GM12878 (cell line): ENCODE measurements at regions of chr22 and their contacts with region 1.

Region 1: GRCh38 chr22:36194971-36195370 is 6.6 kb downstream of the APOL4 start:
- DNase-seq: no peak
- ATAC-seq: peak; percentile 91
- H3K4me3 ChIP-seq: no peak overlapping the region
- H3K27ac ChIP-seq: no peak overlapping the region
- H3K4me1 ChIP-seq: peaks cover 12% of the 10 kb centered on the region
- H3K27me3 ChIP-seq: no peaks in the 10 kb centered on the region
- CTCF ChIP-seq: peak; percentile 68 to 79 (median 78)
- EP300 ChIP-seq: no peak
- POLR2A ChIP-seq: no peak
- RAD21 ChIP-seq: peak; percentile 72

Region 2: GRCh38 chr22:36211237-36211861 is 16.4 kb after region 1 on chr22:
- CTCF ChIA-PET with region 1: interaction called, 21 read pairs
- POLR2A ChIA-PET with region 1: interaction called, 3 read pairs
- RAD21 ChIA-PET with region 1: interaction called, 5 read pairs
- SMC1A ChIA-PET with region 1: interaction called, 5 read pairs
- in situ Hi-C with region 1: no loop called
- intact Hi-C with region 1: no loop called
- DNase-seq: no peak
- ATAC-seq: peak; percentile 72
- H3K4me3 ChIP-seq: no peak overlapping the region
- H3K27ac ChIP-seq: no peak overlapping the region
- H3K4me1 ChIP-seq: peaks cover 4% of the 10 kb centered on the region
- H3K27me3 ChIP-seq: no peaks in the 10 kb centered on the region
- CTCF ChIP-seq: no peak
- EP300 ChIP-seq: no peak
- POLR2A ChIP-seq: no peak
- RAD21 ChIP-seq: no peak

Region 3: DNA sequence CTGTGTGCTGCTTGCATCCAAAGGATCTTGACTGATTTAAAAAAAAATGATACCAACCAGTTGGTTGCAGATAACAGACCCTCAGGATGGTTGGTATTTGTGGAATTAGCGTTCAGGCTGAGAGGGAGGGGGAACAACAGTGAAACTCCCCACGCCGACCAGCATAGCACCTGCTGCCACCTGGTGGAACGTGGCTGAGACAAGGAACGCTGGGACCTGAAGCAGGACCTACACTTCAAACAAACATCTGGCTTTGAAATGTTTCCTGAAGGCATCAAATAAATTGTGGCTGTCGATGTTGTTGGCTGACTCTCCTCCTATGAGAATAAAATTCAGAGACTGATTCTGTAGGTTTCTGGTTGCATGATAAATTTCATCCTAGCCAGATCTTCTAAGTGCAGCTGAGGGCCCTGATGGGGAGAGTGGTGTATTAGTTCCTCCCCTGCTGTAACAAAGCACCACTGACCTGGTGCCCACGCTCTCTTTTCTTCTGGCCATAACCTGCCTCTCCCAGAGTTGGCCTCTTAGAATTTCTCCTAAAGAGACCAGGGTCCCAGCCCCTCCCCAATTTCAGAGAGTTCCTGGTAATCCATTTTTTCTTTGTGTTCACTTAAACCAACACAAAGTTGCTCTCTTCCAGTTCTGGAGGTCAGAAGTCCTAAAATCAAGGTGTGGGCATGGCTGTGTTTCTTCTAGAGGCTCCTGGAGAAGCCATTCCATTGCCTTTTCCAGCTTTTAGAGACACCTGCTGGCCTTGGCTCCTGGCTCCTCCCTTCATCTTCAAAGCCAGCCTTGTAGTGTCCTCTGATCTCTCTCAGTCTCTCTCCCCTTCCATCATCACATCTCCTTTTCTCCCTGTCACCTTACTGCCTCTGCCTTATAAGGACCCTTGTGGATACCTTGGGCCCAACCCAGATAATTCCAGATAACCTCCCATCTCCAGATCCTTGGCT is 27.1 kb after region 1 on chr22:
- CTCF ChIA-PET with region 1: interaction called, 32 read pairs
- POLR2A ChIA-PET with region 1: interaction called, 4 read pairs
- RAD21 ChIA-PET with region 1: interaction called, 8 read pairs
- SMC1A ChIA-PET with region 1: interaction called, 9 read pairs
- in situ Hi-C with region 1: no loop called
- intact Hi-C with region 1: loop called (anchors 1 kb)
- DNase-seq: no peak
- ATAC-seq: peak; percentile 98
- H3K4me3 ChIP-seq: no peak overlapping the region
- H3K27ac ChIP-seq: no peak overlapping the region
- H3K4me1 ChIP-seq: no peaks in the 10 kb centered on the region
- H3K27me3 ChIP-seq: no peaks in the 10 kb centered on the region
- CTCF ChIP-seq: peak; percentile 76 to 83 (median 81)
- EP300 ChIP-seq: no peak
- POLR2A ChIP-seq: no peak
- RAD21 ChIP-seq: peak; percentile 67

Region 4: GRCh38 chr22:36277482-36278291 is 82.7 kb after region 1 on chr22:
- CTCF ChIA-PET with region 1: interaction called, 94 read pairs
- POLR2A ChIA-PET with region 1: no interaction called
- RAD21 ChIA-PET with region 1: interaction called, 19 read pairs
- SMC1A ChIA-PET with region 1: interaction called, 18 read pairs
- in situ Hi-C with region 1: loop called (anchors 5 kb)
- intact Hi-C with region 1: loop called (anchors 2 kb)
- DNase-seq: no peak
- ATAC-seq: peak; percentile 93
- H3K4me3 ChIP-seq: no peak overlapping the region
- H3K27ac ChIP-seq: no peak overlapping the region
- H3K4me1 ChIP-seq: peaks cover 6% of the 10 kb centered on the region
- H3K27me3 ChIP-seq: no peaks in the 10 kb centered on the region
- CTCF ChIP-seq: peak; percentile 79 to 85 (median 83)
- EP300 ChIP-seq: no peak
- POLR2A ChIP-seq: no peak
- RAD21 ChIP-seq: peak; percentile 64

Region 5: DNA sequence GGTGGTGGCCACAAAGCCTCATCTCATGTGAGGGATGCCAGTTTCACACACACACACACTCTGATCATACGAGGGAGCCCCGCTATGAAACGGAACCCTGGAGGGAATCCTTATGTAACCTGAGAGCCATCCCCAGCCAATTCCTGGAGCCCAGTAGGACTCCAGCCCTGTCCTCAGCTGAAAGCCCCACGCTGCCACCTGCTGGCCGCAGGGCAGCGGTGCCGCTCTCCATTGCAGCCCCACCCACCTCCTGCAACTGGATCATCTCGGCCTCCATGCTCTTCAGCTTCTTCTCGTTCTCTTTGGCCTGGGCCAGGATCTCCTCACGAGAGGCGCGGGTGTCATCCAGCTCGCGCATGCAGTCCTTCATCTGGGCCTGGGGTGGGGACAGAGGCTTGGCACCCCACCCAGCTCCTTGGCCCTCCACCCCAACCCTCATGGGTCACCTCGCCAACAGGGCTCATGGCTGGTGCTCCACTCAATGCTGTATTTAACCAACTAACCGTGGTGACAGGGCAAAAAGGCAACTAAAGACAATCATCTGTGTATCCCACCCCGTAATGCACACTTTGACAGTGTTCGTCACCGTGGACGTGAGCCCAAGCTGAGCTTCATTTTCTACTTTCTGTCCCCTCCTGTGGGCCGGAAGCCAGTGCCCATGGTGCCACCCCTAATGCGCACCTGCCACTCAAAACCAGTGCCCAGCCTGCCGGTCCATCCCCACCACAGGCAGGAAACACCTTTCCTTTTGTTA is 91.7 kb after region 1 on chr22:
- CTCF ChIA-PET with region 1: interaction called, 13 read pairs
- POLR2A ChIA-PET with region 1: no interaction called
- RAD21 ChIA-PET with region 1: interaction called, 10 read pairs
- SMC1A ChIA-PET with region 1: interaction called, 6 read pairs
- in situ Hi-C with region 1: no loop called
- intact Hi-C with region 1: no loop called
- DNase-seq: no peak
- ATAC-seq: peak; percentile 93
- H3K4me3 ChIP-seq: no peak overlapping the region
- H3K27ac ChIP-seq: no peak overlapping the region
- H3K4me1 ChIP-seq: no peaks in the 10 kb centered on the region
- H3K27me3 ChIP-seq: no peaks in the 10 kb centered on the region
- CTCF ChIP-seq: peak; percentile 79 to 92 (median 86)
- EP300 ChIP-seq: no peak
- POLR2A ChIP-seq: peak; percentile 48
- RAD21 ChIP-seq: peak; percentile 55

Region 6: DNA sequence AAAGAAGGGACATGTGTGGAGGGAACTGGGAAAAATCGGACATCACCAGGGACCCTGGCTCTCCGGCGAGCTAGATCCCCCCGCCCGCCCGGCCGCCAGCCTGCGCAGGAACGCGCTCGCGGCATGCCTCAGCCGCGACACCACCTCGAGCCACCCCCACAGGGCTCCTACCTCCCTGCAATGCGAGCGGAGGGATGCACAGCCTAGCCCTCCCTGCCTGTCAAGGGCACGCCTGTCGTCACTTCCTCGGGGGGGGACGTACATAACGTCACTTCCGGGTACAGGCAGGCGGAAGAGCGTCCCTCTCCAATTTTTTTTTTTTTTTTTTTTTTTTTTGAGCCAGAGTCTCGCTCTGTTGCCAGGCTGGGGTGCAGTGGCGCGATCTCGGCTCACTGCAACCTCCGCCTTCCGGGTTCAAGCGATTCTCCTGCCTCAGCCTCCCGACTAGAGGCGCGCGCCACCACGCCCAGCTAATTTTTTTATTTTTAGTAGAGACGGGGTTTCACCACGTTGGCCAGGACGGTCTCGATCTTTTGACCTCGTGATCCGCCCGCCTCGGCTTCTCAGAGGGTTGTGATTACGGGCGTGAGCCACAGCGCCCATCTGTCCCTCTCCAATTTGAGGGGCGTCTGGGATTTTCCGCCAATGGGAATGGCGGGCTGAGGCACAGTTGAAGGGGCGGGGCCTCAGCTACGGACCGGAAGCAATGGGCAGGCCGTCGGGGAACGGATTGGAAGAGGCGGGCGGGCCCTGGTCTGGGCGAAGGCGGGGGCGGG is 286.6 kb after region 1 on chr22 and contains the start of gene TXN2:
- CTCF ChIA-PET with region 1: interaction called, 8 read pairs
- POLR2A ChIA-PET with region 1: no interaction called
- RAD21 ChIA-PET with region 1: no interaction called
- SMC1A ChIA-PET with region 1: no interaction called
- in situ Hi-C with region 1: no loop called
- intact Hi-C with region 1: loop called (anchors 10 kb)
- DNase-seq: peak; percentile 82
- ATAC-seq: peak; percentile 94
- H3K4me3 ChIP-seq: peak within 1 kb of the TSS; percentile 96
- H3K27ac ChIP-seq: peak within 1 kb of the TSS; percentile 95
- H3K4me1 ChIP-seq: peaks cover 6% of the 10 kb centered on the region
- H3K27me3 ChIP-seq: no peaks in the 10 kb centered on the region
- CTCF ChIP-seq: no peak
- EP300 ChIP-seq: no peak
- POLR2A ChIP-seq: peak; percentile 99
- RAD21 ChIP-seq: no peak
- polyA plus RNA-seq, gene TXN2: 330 to 350 TPM

Region 7: DNA sequence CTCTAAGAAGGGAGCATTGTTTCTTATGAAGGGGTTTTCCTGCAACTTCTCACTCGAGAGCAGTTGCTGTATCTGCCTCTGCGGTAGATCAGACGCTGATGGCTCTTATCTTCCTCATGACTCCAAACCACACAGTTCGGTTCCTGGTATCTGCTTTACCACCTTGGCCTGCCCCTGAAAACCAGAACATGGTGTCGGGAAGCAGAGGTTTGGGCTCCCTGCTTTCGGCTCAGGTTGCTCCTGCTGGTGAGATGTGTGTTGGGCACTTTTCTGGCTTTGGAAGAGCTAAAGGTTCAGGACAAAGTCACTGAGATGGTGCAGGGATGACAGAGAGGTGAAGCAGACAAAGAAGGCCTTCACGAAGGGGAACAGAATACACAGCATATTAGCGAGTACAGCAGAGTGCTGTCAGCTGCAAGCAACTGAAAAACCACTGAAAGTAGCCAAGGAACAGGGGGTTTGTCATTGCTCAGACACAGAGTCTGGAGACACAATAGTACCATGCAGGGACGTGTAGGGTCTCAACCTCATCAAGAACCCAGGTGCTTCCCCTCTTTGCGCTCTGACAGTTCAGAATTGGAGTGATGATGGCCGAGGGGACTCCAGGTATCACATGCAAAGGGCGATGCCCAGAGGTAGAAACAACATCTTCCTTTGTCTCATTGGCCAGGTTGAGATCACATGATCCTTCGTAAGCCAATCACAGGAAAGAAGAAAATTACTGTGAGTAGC is 706.6 kb after region 1 on chr22:
- CTCF ChIA-PET with region 1: no interaction called
- POLR2A ChIA-PET with region 1: no interaction called
- RAD21 ChIA-PET with region 1: no interaction called
- SMC1A ChIA-PET with region 1: no interaction called
- in situ Hi-C with region 1: no loop called
- intact Hi-C with region 1: no loop called
- DNase-seq: peak; percentile 90
- ATAC-seq: peak; percentile 85
- H3K4me3 ChIP-seq: peak overlapping the region; percentile 35; the same call in 1 of the 2 replicates
- H3K27ac ChIP-seq: peak overlapping the region; percentile 80
- H3K4me1 ChIP-seq: peaks cover 33% of the 10 kb centered on the region
- H3K27me3 ChIP-seq: no peaks in the 10 kb centered on the region
- CTCF ChIP-seq: 0 out of 6 replicates have a peak, but pooled peaks of 1 of the 3 experiments have one; percentile 3
- EP300 ChIP-seq: peak; percentile 60 to 84
- POLR2A ChIP-seq: 0 out of 2 replicates have a peak, but pooled peaks have one; percentile 22
- RAD21 ChIP-seq: no peak